SK-N-SH (cell line): ENCODE measurements at regions of chr21 and their contacts with region 1.

Region 1: GRCh38 chr21:46215436-46216141 is 13.0 kb downstream of the LSS start:
- DNase-seq: no peak
- H3K4me3 ChIP-seq: no peak overlapping the region
- H3K27ac ChIP-seq: no peak overlapping the region
- H3K4me1 ChIP-seq: peaks cover 0 to 26% of the 10 kb centered on the region in 2 experiments; a peak in 1 of 4 replicates
- H3K27me3 ChIP-seq: no peaks in the 10 kb centered on the region
- CTCF ChIP-seq: no peak
- EP300 ChIP-seq: no peak
- RAD21 ChIP-seq: no peak

Region 2: DNA sequence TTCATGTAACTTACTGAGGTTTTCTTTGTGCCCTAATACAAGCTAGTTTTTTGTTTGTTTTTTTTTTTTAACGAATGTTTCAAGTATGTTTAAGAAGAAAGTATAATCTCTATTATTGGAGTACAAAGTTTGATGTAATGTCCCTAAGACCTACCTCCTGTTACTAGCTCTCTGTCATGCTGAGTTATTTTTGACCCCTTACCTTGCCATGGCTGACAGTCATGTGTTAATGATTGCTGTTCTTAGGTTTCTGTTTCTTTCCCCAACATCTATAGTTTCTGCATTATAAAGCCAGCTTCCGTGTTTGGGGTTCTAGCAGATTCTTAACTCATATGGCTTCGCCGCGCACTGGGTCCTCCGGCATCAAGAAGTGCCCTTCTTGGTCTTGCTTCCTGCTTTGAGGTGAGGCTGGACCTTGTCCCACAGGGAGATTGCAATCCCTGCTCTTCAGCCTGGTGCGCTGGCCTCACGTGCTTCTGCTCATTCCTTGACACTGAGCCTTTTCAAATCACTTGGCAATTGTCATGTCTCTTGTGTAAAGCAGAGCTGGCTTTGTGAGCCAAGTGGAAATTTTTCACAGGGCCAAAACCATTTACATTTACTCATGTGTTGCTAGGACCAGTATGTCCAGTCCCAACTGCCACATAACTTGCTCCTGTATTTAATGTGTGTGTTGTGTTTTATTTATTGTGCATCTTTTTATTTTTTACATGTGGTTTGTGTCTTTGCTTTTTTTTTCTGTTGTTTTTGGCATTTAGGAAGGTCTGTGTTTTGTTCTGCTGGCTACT is 369.0 kb before region 1 on chr21:
- CTCF ChIA-PET with region 1: no interaction called
- POLR2A ChIA-PET with region 1: no interaction called
- DNase-seq: no peak
- H3K4me3 ChIP-seq: no peak overlapping the region
- H3K27ac ChIP-seq: no peak overlapping the region
- H3K4me1 ChIP-seq: peaks cover 0 to 26% of the 10 kb centered on the region in 2 experiments; a peak in 2 of 4 replicates
- H3K27me3 ChIP-seq: no peaks in the 10 kb centered on the region
- CTCF ChIP-seq: no peak
- EP300 ChIP-seq: no peak
- RAD21 ChIP-seq: no peak

Region 3: DNA sequence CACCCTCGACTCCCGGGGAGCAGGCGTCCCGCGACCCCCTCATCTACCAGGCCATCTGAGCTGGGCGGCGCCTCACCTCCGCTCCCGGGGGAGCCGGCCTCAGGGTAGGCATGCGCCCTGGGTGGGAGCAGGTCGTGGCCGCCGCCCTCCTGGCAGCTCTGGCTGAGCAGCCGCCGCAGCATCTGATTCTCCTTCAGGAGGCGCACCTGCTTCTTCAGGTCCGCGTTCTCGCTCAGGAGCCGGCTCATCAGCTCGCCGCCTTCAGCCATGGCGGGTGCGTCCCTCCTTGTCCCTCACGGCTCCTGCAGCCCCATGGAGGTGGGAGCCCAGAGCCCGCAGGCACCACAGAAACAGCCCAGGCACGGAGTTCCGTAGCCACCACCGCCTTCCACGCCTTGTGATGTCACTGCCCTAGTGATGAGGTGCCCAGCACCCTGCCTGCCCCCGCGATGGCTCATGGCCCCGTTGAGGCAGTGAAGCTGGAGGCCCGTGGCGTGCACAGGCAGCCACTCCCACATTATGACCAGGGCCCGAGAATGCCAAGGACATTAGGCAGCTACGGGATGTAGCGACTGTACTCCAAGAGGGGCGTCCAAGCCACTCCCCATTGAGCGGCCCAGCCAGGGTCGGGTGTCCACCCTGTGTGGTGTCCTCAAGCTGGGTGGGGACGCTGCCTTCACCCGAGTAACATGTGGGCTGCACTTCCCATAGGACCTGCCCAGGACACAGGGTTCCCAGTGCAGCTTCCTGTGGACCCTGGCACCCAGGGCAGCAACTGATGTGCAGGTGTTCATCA is 32.8 kb before region 1 on chr21:
- CTCF ChIA-PET with region 1: no interaction called
- POLR2A ChIA-PET with region 1: no interaction called
- DNase-seq: no peak
- H3K4me3 ChIP-seq: no peak overlapping the region
- H3K27ac ChIP-seq: no peak overlapping the region
- H3K4me1 ChIP-seq: peaks cover 0 to 7% of the 10 kb centered on the region in 2 experiments; a peak in 1 of 4 replicates
- H3K27me3 ChIP-seq: no peaks in the 10 kb centered on the region
- CTCF ChIP-seq: no peak
- EP300 ChIP-seq: no peak
- RAD21 ChIP-seq: no peak

Region 4: GRCh38 chr21:46229133-46230106 is 13.8 kb after region 1 on chr21:
- CTCF ChIA-PET with region 1: interaction called, 14 read pairs
- POLR2A ChIA-PET with region 1: interaction called, 5 read pairs
- DNase-seq: peak; percentile 86
- H3K4me3 ChIP-seq: peak overlapping the region; percentile 54 to 76
- H3K27ac ChIP-seq: peak overlapping the region in 1 of 2 experiments; percentile 76; a peak in 2 of 4 replicates
- H3K4me1 ChIP-seq: peaks cover 12 to 23% of the 10 kb centered on the region in 2 experiments; a peak in 3 of 4 replicates
- H3K27me3 ChIP-seq: no peaks in the 10 kb centered on the region
- CTCF ChIP-seq: peak; percentile 64
- EP300 ChIP-seq: no peak
- RAD21 ChIP-seq: no peak